ENCODE measurements at regions of chr20 and their contacts with region 1.

Region 1: GRCh38 chr20:56247948-56248782 is at the start of gene MC3R:
- H3K4me3 ChIP-seq: no peak within 1 kb of the TSS
- H3K27ac ChIP-seq: no peak within 1 kb of the TSS
- H3K4me1 ChIP-seq: no peaks in the 10 kb centered on the region
- CTCF ChIP-seq: no peak; the same call in 1 of the 2 replicates

Region 2: DNA sequence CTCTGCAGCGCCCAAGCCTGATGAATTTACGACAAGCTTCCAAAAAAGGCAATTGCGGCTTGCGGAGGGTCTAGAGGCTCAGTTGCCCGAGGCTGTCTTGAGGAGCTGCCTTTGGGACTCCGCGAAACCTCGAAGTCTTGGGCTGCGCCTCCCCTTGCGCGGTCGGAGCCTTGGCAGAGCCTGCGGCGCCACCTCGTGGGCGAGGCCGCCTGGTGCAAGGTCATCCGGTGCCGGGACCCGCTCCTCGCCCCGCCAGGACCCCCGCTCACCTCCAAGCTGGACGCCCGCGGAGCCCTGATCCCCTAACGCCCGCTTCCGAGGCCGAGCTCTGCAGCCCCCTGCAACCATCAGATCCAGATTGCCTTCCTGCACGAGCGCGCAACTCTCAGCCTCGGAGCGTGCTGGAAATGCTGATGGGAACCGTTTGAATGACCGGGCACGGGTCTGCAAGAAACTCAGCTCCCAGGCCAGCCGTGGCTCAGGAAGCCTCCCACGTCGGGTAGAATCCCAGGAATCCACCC is 95.8 kb after region 1 on chr20:
- CTCF ChIA-PET with region 1: interaction called, 14 read pairs
- POLR2A ChIA-PET with region 1: no interaction called
- H3K4me3 ChIP-seq: no peak overlapping the region
- H3K27ac ChIP-seq: no peak overlapping the region
- H3K4me1 ChIP-seq: peaks cover 6% of the 10 kb centered on the region; the same call in 1 of the 2 replicates
- CTCF ChIP-seq: peak; percentile 55